Activated CD4-positive, alpha-beta T cell treated with anti-CD3 and anti-CD28 coated beads, Interleukin-2, amount 10 ng/mL, durations not matched to agents 24 days and 14 days (primary cell): ENCODE measurements at regions of chr9 and their contacts with region 1.

Region 1: GRCh38 chr9:76576344-76576743 is 117.4 kb downstream of the GCNT1 start:
- DNase-seq: peak; percentile 89
- H3K4me3 Mint-ChIP-seq: peak overlapping the region; percentile 65
- H3K27ac Mint-ChIP-seq: peak overlapping the region; percentile 88
- H3K4me1 Mint-ChIP-seq: peaks cover 26% of the 10 kb centered on the region
- H3K27me3 Mint-ChIP-seq: peaks cover 3% of the 10 kb centered on the region

Region 2: GRCh38 chr9:75683591-75683990 is 892.8 kb before region 1 on chr9:
- intact Hi-C with region 1: no loop called
- DNase-seq: no peak
- H3K4me3 Mint-ChIP-seq: no peak overlapping the region
- H3K27ac Mint-ChIP-seq: no peak overlapping the region
- H3K4me1 Mint-ChIP-seq: no peaks in the 10 kb centered on the region
- H3K27me3 Mint-ChIP-seq: no peaks in the 10 kb centered on the region

Region 3: GRCh38 chr9:76458903-76459690 is 117.2 kb before region 1 on chr9 and contains the start of gene GCNT1:
- intact Hi-C with region 1: loop called (anchors 5 kb)
- DNase-seq: peak; percentile 99
- H3K4me3 Mint-ChIP-seq: peak within 1 kb of the TSS; percentile 92
- H3K27ac Mint-ChIP-seq: peak within 1 kb of the TSS; percentile 88
- H3K4me1 Mint-ChIP-seq: peaks cover 28% of the 10 kb centered on the region
- H3K27me3 Mint-ChIP-seq: no peaks in the 10 kb centered on the region
- total RNA-seq, gene GCNT1: 7.0 and 9.8 TPM in 2 replicates

Region 4: DNA sequence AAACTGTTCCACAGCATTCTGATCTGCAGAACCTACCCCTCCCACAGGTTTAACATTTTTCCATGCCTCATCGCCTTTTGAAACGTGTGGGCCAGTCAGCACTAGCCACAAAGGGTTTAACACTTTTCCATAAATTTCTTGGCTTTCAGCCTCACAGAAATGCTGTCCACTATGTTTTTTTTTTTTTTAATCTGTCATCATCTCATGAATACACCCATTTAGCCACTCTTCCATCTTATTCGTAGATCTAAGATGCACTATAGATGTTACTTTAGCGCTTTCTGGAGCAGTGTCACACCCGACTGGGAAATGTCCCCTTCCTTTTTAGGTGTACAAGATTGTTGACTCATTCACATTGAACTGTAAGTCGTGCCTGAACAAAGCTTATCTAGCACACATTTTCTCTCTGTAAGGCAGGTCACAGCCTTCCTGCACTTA is 55.1 kb before region 1 on chr9:
- intact Hi-C with region 1: loop called (anchors 10 kb)
- DNase-seq: no peak
- H3K4me3 Mint-ChIP-seq: no peak overlapping the region
- H3K27ac Mint-ChIP-seq: no peak overlapping the region
- H3K4me1 Mint-ChIP-seq: peaks cover 9% of the 10 kb centered on the region
- H3K27me3 Mint-ChIP-seq: no peaks in the 10 kb centered on the region

Region 5: DNA sequence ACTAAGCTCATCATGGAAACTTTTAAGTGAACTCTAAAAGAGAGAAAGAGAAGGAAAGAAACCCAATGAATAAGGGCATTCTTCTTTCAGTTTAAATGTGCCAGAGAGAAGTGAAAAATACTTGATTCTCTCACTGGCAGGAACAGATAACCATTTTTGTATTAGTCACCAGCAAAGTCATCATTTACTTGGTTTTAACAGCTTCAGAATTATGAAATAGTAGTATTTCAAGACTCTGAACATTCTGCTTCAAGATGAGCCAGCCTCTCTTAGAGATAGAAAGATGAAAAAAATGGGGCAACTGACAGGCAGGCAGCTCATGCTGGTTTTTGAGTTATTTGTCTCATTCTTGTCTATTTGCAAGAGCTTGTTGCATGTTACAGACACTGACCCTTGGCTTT is 13.8 kb before region 1 on chr9:
- intact Hi-C with region 1: loop called (anchors 1 kb)
- DNase-seq: no peak
- H3K4me3 Mint-ChIP-seq: no peak overlapping the region
- H3K27ac Mint-ChIP-seq: peak overlapping the region; percentile 29
- H3K4me1 Mint-ChIP-seq: peaks cover 6% of the 10 kb centered on the region
- H3K27me3 Mint-ChIP-seq: peaks cover 2% of the 10 kb centered on the region

Region 6: GRCh38 chr9:76591256-76591950 is 15.1 kb after region 1 on chr9:
- intact Hi-C with region 1: no loop called
- DNase-seq: no peak
- H3K4me3 Mint-ChIP-seq: no peak overlapping the region
- H3K27ac Mint-ChIP-seq: no peak overlapping the region
- H3K4me1 Mint-ChIP-seq: peaks cover 14% of the 10 kb centered on the region
- H3K27me3 Mint-ChIP-seq: peaks cover 9% of the 10 kb centered on the region

Region 7: GRCh38 chr9:76658535-76659231 is 82.3 kb after region 1 on chr9:
- intact Hi-C with region 1: loop called (anchors 5 kb)
- DNase-seq: peak; percentile 73
- H3K4me3 Mint-ChIP-seq: no peak overlapping the region
- H3K27ac Mint-ChIP-seq: no peak overlapping the region
- H3K4me1 Mint-ChIP-seq: peaks cover 27% of the 10 kb centered on the region
- H3K27me3 Mint-ChIP-seq: peaks cover 8% of the 10 kb centered on the region

Region 8: GRCh38 chr9:77944556-77945243 is 1368.4 kb after region 1 on chr9:
- intact Hi-C with region 1: no loop called
- DNase-seq: peak; percentile 70
- H3K4me3 Mint-ChIP-seq: peak overlapping the region; percentile 59
- H3K27ac Mint-ChIP-seq: peak overlapping the region; percentile 54
- H3K4me1 Mint-ChIP-seq: peaks cover 31% of the 10 kb centered on the region
- H3K27me3 Mint-ChIP-seq: no peaks in the 10 kb centered on the region